Activated T-helper 2 cell treated with anti-CD3 and anti-CD28 coated beads, Interferon-gamma antibody, Interleukin-2, Interleukin-4, amounts not matched to agents 10 μg/mL and 5 μg/mL and 100 μg/mL, durations not matched to agents 14 hours and 24 hours and 36 hours (primary cell): ENCODE measurements at regions of chr19 and their contacts with region 1.

Region 1: GRCh38 chr19:18000935-18001778 is 6.8 kb upstream of the ARRDC2 start:
- DNase-seq: peak; percentile 88
- H3K4me3 Mint-ChIP-seq: peak overlapping the region; percentile 91
- H3K27ac Mint-ChIP-seq: peak overlapping the region; percentile 98
- H3K4me1 Mint-ChIP-seq: peaks cover 11% of the 10 kb centered on the region
- H3K27me3 Mint-ChIP-seq: peaks cover 2% of the 10 kb centered on the region

Region 2: DNA sequence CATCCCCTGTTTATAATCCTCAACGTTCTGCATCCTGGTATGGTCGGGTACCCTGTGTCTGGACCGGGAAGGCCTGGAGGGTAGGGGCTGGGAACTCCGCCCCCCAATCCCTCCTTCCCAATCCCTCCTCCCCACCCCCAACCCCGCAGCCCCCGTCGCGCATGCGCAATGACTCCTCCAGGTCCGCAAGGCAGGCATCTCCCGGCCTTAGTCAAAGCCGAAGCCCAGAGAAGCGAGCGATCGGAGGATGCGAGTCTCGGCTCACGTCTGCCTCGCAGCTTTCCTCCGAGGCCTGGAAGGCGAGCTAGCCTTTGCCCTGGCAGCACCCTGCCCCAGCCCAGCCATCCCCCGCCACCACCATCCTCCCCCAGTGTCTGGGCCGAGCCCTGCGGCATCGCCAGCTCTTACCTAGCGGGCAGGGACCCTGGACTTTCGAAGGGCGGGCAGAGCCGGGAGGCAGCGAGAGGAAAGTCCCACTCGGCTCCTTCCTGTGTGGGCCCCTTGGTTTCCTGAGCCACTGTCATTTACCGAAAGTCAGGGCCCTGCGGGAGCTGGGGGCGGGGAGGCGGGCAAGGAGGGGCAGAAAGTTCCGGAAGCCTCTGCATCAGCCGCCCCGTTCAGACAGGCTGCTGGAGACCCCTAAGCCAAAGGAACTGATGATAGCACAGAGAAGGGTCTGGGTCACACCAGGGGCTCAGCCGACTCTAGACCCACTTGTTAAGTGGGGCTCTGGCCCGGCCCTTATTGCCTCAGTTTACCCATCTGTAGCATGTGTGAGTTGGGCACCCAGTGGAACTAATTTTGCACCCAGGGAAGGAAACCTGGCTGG is 153.4 kb before region 1 on chr19 and contains the start of gene JAK3:
- intact Hi-C with region 1: no loop called
- DNase-seq: peak; percentile 82
- H3K4me3 Mint-ChIP-seq: peak within 1 kb of the TSS; percentile 90
- H3K27ac Mint-ChIP-seq: peak within 1 kb of the TSS; percentile 97
- H3K4me1 Mint-ChIP-seq: peaks cover 45% of the 10 kb centered on the region
- H3K27me3 Mint-ChIP-seq: no peaks in the 10 kb centered on the region
- total RNA-seq, gene JAK3: 212 and 221 TPM in 2 replicates

Region 3: GRCh38 chr19:17873786-17874757 is 127.1 kb before region 1 on chr19:
- intact Hi-C with region 1: loop called (anchors 5 kb)
- DNase-seq: peak; percentile 56
- H3K4me3 Mint-ChIP-seq: peak overlapping the region; percentile 57
- H3K27ac Mint-ChIP-seq: peak overlapping the region; percentile 38
- H3K4me1 Mint-ChIP-seq: peaks cover 2% of the 10 kb centered on the region
- H3K27me3 Mint-ChIP-seq: peaks cover 2% of the 10 kb centered on the region

Region 4: GRCh38 chr19:17926044-17926443 is 75.1 kb before region 1 on chr19:
- intact Hi-C with region 1: no loop called
- DNase-seq: no peak
- H3K4me3 Mint-ChIP-seq: no peak overlapping the region
- H3K27ac Mint-ChIP-seq: no peak overlapping the region
- H3K4me1 Mint-ChIP-seq: no peaks in the 10 kb centered on the region
- H3K27me3 Mint-ChIP-seq: peaks cover 2% of the 10 kb centered on the region

Region 5: DNA sequence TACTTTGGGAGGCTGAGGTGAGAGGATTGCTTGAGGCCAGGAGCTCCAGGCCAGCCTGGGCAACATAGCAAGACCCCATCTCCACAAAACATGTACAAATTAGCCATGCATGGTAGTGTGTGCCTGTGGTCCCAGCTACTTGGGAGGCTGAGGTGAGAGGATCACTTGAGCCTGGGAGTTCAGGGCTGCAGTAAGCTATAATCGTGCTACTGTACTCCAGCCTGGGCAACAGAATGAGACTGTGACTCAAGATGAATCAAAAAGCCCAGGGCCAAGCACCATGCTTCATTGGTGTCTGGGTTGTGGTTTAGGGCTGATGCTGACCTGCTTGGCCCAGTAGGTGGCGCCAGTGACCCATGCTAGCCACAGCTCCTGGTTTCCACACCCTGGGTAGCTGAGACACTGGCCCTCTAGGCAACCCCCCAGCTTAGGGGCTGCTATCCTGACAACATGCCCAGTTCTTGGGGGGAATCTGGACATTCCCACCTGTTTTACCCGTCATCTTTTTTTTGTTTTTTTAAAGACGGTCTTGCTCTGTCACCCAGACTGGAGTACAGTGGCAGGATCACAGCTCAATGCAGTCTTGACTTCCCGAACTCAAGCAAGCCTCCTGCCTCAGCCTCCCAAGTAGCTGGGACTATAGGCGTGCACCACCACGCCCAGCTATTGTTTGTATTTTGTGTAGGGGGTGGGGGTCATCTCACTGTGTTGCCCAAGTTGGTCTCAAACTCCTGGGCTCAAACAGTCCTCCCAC is 62.9 kb before region 1 on chr19:
- intact Hi-C with region 1: loop called (anchors 1 kb)
- DNase-seq: peak; percentile 69
- H3K4me3 Mint-ChIP-seq: no peak overlapping the region
- H3K27ac Mint-ChIP-seq: no peak overlapping the region
- H3K4me1 Mint-ChIP-seq: peaks cover 5% of the 10 kb centered on the region
- H3K27me3 Mint-ChIP-seq: no peaks in the 10 kb centered on the region

Region 6: DNA sequence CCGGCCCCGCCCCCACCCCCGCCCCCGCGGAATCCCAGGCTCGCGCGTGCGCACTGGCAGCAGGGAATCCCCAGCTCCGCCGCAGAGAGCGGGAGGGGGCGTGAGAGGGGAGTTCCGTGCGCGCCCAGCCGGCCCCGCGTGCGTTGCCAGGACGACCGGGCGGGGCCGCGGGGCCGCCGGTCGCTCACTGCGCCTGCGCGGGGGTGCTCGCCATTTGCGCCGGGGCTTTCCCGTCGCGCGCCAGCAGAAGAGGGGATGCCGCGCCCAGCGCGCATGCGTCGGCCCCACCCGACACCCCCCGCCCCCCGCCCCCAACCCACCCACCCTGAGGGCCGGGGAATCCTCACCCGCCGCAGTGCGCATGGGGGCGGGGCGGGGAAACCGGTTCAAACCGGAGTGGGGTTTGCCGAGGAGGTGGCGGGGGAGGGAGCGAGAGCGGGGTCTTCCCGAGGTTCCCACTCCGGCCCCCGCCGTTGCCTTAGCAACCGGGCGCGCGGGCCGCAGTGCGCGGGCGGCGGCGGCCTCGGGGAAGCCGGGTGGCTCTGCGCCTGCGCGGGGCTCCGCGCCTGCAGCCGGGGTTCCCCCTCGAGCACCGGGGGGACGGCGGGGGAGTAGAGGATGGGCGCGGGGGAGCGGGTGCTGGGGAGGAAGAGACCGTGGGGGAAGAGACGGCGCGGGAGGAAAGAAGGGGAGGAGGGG is 53.2 kb before region 1 on chr19:
- intact Hi-C with region 1: loop called (anchors 2 kb)
- DNase-seq: peak; percentile 94
- H3K4me3 Mint-ChIP-seq: peak overlapping the region; percentile 75
- H3K27ac Mint-ChIP-seq: no peak overlapping the region
- H3K4me1 Mint-ChIP-seq: peaks cover 32% of the 10 kb centered on the region
- H3K27me3 Mint-ChIP-seq: peaks cover 34% of the 10 kb centered on the region